PC-3 (cell line): ENCODE measurements at regions of chrX and their contacts with region 1.

Region 1: GRCh38 chrX:82134378-82134777 is 932.5 kb downstream of the SH3BGRL start:
- DNase-seq: peak; percentile 32
- ATAC-seq: no peak
- H3K4me3 ChIP-seq: no peak overlapping the region
- H3K27ac ChIP-seq: no peak overlapping the region
- H3K4me1 ChIP-seq: no peaks in the 10 kb centered on the region
- H3K27me3 ChIP-seq: no peaks in the 10 kb centered on the region
- CTCF ChIP-seq: no peak

Region 2: DNA sequence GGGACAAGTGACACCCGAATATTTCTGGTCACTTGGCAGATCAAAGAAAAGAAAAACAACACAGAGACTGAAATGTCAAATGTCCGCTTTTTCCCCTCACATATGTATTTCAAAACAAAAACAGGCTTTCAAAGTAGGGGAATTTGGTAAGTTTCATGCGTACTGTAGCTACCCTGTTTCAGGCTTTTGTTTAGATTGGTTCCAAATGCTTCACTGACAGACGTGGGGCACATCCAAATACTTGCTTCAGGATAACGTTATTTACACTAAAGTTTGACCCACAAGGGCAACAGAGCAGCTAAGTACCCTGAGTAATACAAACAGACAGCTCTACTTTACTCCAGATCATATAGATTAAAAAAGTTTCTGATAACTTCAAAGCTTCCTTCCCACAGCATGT is 569.2 kb after region 1 on chrX:
- CTCF ChIA-PET with region 1: no interaction called
- POLR2A ChIA-PET with region 1: interaction called, 21 read pairs
- intact Hi-C with region 1: no loop called
- DNase-seq: no peak
- ATAC-seq: no peak
- H3K4me3 ChIP-seq: no peak overlapping the region
- H3K27ac ChIP-seq: no peak overlapping the region
- H3K4me1 ChIP-seq: no peaks in the 10 kb centered on the region
- H3K27me3 ChIP-seq: no peaks in the 10 kb centered on the region
- CTCF ChIP-seq: no peak